HAP-1 (cell line): ENCODE measurements at regions of chr4 and their contacts with region 1.

Region 1: DNA sequence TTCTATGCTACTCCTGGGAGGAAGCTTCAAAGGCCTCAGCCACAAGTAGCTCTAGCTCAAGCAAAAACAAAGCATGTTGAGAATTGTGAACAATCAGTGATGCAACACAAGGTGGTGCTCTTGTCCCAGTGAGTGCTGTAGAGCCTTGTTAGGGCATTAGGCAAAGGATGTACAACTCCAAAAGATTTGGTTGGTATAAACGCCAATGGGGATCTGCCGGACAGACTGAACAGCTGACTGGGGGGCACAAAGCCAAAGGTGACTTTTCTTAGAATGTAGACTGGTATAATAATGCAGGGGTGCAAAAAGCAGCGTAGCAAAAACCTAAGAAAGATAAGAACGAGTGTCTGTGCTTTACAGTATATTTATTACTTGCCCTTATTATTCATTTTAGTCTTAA is 62.6 kb upstream of the ALB start:
- DNase-seq: peak; percentile 68 to 83
- H3K4me3 ChIP-seq: no peak overlapping the region
- H3K4me1 ChIP-seq: no peaks in the 10 kb centered on the region
- H3K27me3 ChIP-seq: no peaks in the 10 kb centered on the region

Region 2: GRCh38 chr4:73446336-73446938 is 105.0 kb after region 1 on chr4:
- in situ Hi-C with region 1: loop called (anchors 10 kb)
- DNase-seq: peak; percentile 40 to 82
- H3K4me3 ChIP-seq: no peak overlapping the region
- H3K4me1 ChIP-seq: no peaks in the 10 kb centered on the region
- H3K27me3 ChIP-seq: no peaks in the 10 kb centered on the region

Region 3: DNA sequence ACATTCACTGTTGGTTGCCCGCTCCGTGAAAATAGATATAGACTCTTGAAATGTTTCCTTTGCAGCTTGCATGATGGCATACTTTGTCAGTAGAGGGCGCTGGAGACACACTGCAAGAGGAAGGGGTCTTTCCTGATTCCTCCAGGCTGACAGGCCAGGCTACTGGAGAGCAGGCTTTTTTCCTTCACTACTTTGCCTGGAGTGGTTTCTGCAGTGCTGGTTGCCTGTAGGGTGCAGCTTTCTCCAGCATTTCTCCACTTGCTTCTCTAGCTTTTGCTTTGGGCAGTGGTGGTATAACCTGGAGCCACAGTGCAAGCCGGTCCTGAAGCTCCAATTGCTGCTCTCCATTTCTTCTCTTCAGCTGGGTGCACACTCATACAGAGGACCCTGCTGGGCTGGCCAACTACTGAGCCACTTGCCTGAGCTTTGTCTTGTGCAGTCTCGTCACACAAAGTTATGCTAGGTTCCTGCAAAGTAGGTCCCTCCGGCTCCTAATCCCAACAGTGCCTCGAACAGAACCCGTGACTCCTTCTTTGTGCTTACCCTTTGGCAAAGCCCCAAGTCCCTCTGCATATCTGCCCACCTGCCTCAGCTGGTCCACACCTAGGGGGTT is 232.4 kb after region 1 on chr4:
- in situ Hi-C with region 1: loop called (anchors 25 kb)
- DNase-seq: peak; percentile 58 to 80
- H3K4me3 ChIP-seq: no peak overlapping the region
- H3K4me1 ChIP-seq: no peaks in the 10 kb centered on the region
- H3K27me3 ChIP-seq: peaks cover 6% of the 10 kb centered on the region; the same call in 1 of the 2 replicates

Region 4: DNA sequence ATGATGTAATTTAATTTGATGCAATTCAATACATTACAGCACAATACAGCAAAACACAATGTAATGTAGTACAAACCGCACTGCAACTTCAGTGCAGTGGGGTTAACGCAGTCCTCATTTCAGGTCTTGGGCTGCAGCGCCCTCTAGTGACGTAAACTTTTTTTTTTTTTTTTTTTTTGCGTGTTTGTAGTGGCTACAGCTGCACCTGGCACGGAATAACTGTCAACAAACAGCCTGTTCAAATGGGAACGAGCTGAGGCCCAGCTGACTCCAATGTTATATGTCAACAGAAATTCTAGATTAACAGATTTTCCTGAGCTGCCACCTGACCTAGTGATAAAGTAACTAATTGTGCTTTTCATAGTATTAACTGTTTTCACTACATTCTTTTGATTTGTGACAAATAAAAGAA is 312.2 kb after region 1 on chr4:
- in situ Hi-C with region 1: loop called (anchors 10 kb)
- DNase-seq: peak; percentile 7 to 11
- H3K4me3 ChIP-seq: no peak overlapping the region
- H3K4me1 ChIP-seq: no peaks in the 10 kb centered on the region
- H3K27me3 ChIP-seq: peaks cover 2% of the 10 kb centered on the region; the same call in 1 of the 2 replicates